A549 (cell line): ENCODE measurements at regions of chr5 and their contacts with region 1.

Region 1: DNA sequence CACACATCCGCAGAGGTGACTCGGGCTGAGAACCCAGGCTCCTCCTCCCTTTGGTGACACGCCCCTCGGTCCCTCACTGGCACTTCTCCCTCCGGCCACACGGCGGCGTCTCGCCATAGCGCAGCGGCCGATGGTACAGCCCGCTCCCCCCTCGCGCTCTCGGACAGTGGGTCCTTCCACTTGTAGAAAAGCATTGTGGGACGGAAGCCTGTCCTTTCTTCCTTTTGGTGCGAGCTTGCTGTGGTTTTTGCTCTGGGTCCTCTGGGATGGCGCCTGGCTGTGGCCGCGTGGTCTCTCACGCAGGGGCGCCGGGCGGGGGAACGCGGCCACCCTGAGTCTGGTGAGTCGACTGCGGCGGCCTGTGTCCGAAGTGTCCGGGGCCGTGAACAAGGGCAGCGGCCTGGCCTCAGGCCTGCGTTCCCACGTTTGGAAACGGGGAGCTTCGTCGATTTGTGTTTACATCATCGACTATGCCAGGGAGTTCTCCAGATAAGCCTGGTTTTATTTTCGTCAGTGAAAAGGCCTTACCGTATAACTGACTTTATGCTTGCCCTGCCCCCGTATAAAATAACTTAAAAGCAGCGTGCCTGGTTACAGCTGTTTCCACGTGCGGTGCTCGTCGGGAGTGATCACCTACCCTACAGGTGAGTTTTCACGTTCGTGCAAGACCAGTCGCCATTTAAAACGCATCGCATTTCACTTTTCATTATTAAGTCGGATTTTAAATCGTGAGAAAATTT is 258.3 kb downstream of the EPB41L4A start:
- DNase-seq: peak; percentile 68 to 91
- ATAC-seq: peak; percentile 95 to 96
- H3K4me3 ChIP-seq: peak overlapping the region; percentile 95
- H3K27ac ChIP-seq: peak overlapping the region; percentile 82 to 98
- H3K4me1 ChIP-seq: peaks cover 23% of the 10 kb centered on the region
- CTCF ChIP-seq: peak; percentile 79
- EP300 ChIP-seq: no peak
- POLR2A ChIP-seq: peak; percentile 95
- RAD21 ChIP-seq: peak in 1 of 2 experiments; percentile 37; a peak in 2 of 5 replicates

Region 2: GRCh38 chr5:112174959-112175594 is 14.3 kb after region 1 on chr5:
- CTCF ChIA-PET with region 1: interaction called, 30 read pairs
- POLR2A ChIA-PET with region 1: interaction called, 4 read pairs
- DNase-seq: peak; percentile 47 to 63
- ATAC-seq: peak; percentile 58 to 89; a peak in 5 of 6 replicates
- H3K4me3 ChIP-seq: no peak overlapping the region
- H3K27ac ChIP-seq: no peak overlapping the region
- H3K4me1 ChIP-seq: 0 out of 3 replicates have a peak, but pooled peaks cover 4% of the 10 kb centered on the region
- CTCF ChIP-seq: peak; percentile 88
- EP300 ChIP-seq: no peak
- POLR2A ChIP-seq: no peak
- RAD21 ChIP-seq: peak; percentile 77 to 79